Psoas muscle (tissue), 8 donors: ENCODE measurements at regions of chr12 and their contacts with region 1.

Region 1: DNA sequence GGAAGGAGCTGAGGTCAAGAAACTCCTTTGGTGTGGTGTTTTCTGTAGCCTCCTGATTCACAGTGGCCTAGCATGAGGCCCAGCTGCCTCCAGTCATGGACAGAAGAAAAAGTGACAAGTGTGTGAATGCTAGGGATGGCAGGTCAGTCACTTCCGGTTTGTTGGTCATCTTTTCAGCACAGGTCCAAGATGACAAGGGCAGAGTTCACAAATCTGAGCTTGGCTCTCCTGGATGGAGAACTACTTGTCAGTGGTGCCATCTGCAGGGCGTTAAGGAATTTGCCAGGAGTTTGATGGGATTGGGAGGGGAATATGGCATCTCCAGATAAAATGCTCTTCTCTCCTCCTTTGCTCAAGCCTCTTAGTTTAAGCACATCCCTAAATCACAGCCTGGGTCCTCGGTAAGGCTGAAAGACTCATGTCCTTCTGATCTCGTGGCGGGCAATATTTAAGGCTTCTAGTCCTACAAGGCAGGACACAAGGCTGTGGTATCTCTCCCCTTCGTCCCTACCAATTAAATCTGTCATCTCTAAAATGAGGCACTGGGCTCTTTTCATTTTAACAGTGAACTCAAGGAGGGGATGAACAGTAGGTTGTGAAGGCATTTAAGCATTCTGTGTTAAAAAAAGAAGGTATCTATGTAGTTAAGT is 10.0 kb downstream of the TUBA1B start:
- DNase-seq: no peak
- ATAC-seq: peak; percentile 79 to 96 (median 91)
- H3K4me3 ChIP-seq: no peak overlapping the region
- H3K27ac ChIP-seq: no peak overlapping the region
- H3K4me1 ChIP-seq: no peaks in the 10 kb centered on the region
- H3K27me3 ChIP-seq: no peaks in the 10 kb centered on the region
- CTCF ChIP-seq: peak; percentile 60

Region 2: GRCh38 chr12:48681738-48682532 is 439.2 kb before region 1 on chr12 and contains the start of gene KANSL2:
- intact Hi-C with region 1: no loop called
- DNase-seq: peak; percentile 98 to 99
- ATAC-seq: peak; percentile 97 to 98 (median 98)
- H3K4me3 ChIP-seq: peak within 1 kb of the TSS; percentile 82
- H3K27ac ChIP-seq: peak within 1 kb of the TSS; percentile 90
- H3K4me1 ChIP-seq: peaks cover 37% of the 10 kb centered on the region
- H3K27me3 ChIP-seq: no peaks in the 10 kb centered on the region
- CTCF ChIP-seq: no peak
- total RNA-seq, gene KANSL2: 30.7 to 59.4 (median 33.4) TPM

Region 3: DNA sequence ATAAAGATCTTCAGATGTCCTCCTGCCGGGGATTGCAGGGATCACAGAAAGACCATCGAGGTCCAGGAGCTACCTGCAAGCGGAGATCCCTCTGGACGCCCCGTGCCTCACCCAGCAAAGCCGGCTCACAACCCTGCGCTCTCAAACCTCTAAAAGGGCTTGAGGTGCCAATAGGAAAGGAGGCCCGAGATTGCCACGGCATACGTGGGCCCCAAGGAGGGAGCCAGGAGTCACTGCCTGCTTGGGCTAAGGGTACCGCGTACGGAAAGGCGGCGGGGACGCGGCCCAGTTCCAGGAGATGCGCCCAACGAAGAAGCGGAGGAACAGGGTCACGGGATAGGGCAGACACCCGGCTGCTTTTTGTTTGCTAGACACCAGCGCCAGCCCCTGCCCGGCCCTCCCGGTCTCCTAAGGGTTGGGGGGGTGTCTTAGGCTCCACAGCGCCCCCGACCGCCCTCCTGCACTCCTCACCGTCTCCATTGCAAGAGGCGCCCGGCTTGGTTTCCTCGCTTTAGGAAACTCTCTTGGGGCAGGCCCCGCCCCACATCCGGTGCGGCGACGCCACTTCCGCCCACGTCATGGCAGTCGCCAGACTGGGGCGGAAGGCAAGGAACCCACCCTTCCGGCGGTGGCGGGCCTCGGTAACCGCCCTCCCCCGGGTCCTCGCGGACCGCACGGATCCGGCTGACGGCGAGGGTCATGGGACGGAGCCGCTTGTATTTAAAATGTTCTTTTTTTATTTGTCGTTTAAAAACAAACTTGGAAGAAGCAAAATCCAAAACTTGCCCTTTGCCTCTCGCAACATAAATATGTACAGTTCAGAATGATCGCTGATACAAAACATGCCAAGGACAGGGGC is 102.7 kb before region 1 on chr12 and contains the start of gene PRKAG1:
- intact Hi-C with region 1: no loop called
- DNase-seq: peak; percentile 96 to 98
- ATAC-seq: peak; percentile 89 to 93 (median 90)
- H3K4me3 ChIP-seq: peak within 1 kb of the TSS; percentile 88
- H3K27ac ChIP-seq: peak within 1 kb of the TSS; percentile 96
- H3K4me1 ChIP-seq: peaks cover 36% of the 10 kb centered on the region
- H3K27me3 ChIP-seq: no peaks in the 10 kb centered on the region
- CTCF ChIP-seq: peak; percentile 42
- total RNA-seq, gene PRKAG1: 49.5 to 91.6 (median 70.6) TPM

Region 4: DNA sequence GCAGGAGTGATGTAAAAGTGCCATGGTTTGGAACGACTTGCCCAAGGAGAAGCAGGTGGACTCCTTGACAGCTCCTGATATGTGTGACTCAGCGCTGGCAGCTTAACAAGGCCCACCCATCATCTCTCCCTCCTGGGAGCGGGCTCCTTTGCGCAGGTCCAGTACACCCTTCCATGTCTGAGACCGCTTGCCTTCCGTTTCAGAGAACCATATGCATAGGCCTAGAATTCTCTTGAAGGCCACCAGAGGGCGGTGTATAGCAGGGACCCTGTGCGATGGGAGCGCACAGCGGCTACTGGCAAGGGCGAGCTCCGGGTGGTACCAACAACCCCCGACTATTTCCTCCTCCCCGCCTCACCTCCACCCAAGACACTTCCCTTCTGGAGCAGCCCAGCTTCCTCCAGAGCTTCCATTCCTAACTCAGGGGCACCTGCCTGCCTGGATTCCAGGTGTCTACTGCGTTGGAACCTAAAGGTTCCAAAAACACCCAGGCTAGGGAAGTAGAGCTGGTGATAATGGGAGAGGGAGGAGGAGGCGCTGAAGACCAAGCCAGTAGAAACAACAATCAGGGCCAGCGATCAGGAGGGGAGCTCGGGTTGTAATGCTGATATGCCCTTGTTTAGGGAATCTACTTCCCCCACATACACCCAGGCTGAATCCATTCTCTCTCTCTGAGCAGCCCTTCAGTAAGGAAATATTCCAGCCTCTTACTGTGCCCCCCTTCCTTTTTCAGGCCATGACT is 32.8 kb before region 1 on chr12:
- intact Hi-C with region 1: loop called (anchors 2 to 5 kb)
- DNase-seq: peak; percentile 67 to 83
- ATAC-seq: peak; percentile 93 to 95 (median 94)
- H3K4me3 ChIP-seq: no peak overlapping the region
- H3K27ac ChIP-seq: no peak overlapping the region
- H3K4me1 ChIP-seq: peaks cover 9% of the 10 kb centered on the region
- H3K27me3 ChIP-seq: peaks cover 0 to 37% (median 20%) of the 10 kb centered on the region in 3 donors
- CTCF ChIP-seq: peak; percentile 88